ENCODE measurements at regions of chr9 and their contacts with region 1.

Region 1: DNA sequence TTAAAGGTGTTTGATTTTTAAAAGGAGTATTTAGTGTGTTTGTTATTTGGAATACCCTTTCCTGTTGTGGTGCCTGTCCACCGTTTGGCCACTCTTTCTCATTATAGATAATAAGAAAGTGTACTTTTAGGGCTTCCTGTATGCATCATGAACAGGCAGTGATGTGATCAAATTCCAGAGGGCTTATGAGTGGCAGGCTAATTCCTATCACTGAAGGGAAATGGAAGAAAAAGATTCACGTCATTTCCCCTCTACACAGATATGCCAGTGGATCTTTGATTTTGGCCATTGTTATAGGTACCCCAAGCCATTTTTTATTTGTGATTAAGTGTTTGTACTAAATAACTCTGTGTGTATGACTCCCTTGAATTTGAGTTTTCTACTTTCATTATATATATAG is 37.1 kb downstream of the RPS6 start:
- DNase-seq: no peak
- H3K4me3 ChIP-seq: no peak overlapping the region
- H3K4me3 Mint-ChIP-seq: no peak overlapping the region
- H3K27ac ChIP-seq: no peak overlapping the region
- H3K27ac Mint-ChIP-seq: no peak overlapping the region
- H3K4me1 ChIP-seq: no peaks in the 10 kb centered on the region
- H3K4me1 Mint-ChIP-seq: no peaks in the 10 kb centered on the region
- H3K27me3 ChIP-seq: no peaks in the 10 kb centered on the region
- H3K27me3 Mint-ChIP-seq: no peaks in the 10 kb centered on the region

Region 2: GRCh38 chr9:19358701-19359100 is 15.8 kb after region 1 on chr9:
- CTCF ChIA-PET with region 1: no interaction called
- POLR2A ChIA-PET with region 1: no interaction called
- intact Hi-C with region 1: loop called (anchors 2 kb)
- DNase-seq: no peak
- H3K4me3 ChIP-seq: no peak overlapping the region
- H3K4me3 Mint-ChIP-seq: no peak overlapping the region
- H3K27ac ChIP-seq: no peak overlapping the region
- H3K27ac Mint-ChIP-seq: peak overlapping the region in 4 of 7 donors; percentile 1 to 44 (median 38)
- H3K4me1 ChIP-seq: no peaks in the 10 kb centered on the region
- H3K4me1 Mint-ChIP-seq: peaks cover 0 to 1% (median 0%) of the 10 kb centered on the region in 4 donors
- H3K27me3 ChIP-seq: no peaks in the 10 kb centered on the region
- H3K27me3 Mint-ChIP-seq: no peaks in the 10 kb centered on the region